ENCODE measurements at regions of chr7 and their contacts with region 1.

Region 1: GRCh38 chr7:79341902-79342301 is 111.6 kb downstream of the MAGI2 start:
- DNase-seq: peak; percentile 6
- ATAC-seq: no peak
- H3K4me3 ChIP-seq: no peak overlapping the region
- H3K27ac ChIP-seq: no peak overlapping the region
- H3K4me1 ChIP-seq: peaks cover 12% of the 10 kb centered on the region
- H3K27me3 ChIP-seq: no peaks in the 10 kb centered on the region
- CTCF ChIP-seq: peak; percentile 40; the same call in 1 of the 2 replicates

Region 2: GRCh38 chr7:79622781-79623180 is 280.9 kb after region 1 on chr7:
- CTCF ChIA-PET with region 1: no interaction called
- POLR2A ChIA-PET with region 1: no interaction called
- intact Hi-C with region 1: loop called (anchors 10 kb)
- DNase-seq: peak; percentile 83
- ATAC-seq: peak; percentile 76
- H3K4me3 ChIP-seq: peak overlapping the region; percentile 41; the same call in 1 of the 2 replicates
- H3K27ac ChIP-seq: peak overlapping the region; percentile 95
- H3K4me1 ChIP-seq: peaks cover 37% of the 10 kb centered on the region
- H3K27me3 ChIP-seq: no peaks in the 10 kb centered on the region
- CTCF ChIP-seq: no peak

Measured in PC-3 (cell line).